ENCODE measurements at regions of chr7 and their contacts with region 1.

Region 1: DNA sequence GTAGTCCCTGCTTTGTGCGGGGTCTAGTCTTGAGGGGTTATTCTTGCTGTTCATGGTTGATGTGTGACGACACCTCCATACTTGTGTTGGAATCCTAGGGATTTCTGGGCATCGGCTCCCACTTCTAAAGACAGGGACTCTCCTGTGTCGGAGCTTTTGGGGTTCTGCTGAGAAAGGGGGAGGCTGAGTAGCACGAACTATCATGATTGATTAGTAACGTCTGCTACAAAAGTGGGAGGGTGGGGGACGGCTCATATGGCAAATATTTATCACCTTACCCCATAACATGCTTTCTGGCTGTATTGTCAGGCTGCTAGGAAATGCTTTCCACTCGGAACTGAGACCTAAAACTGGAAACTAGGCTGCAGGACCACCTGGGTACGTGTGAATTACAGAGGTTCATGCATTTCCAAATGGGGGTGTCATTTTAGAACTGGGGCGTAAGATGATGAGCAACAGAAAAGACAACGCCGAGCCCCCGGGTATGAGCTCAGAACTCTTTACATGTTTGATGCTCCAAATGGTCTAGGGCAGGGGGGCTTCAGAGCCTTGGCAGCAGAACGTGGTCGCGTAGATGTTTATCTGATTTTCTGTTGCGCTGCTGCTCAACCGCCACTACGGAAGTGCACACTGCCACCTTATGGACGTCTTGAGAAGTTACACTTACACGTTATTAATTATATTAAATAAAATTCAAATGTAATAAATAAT is 15.1 kb upstream of the NME8 start:
- DNase-seq: no peak
- ATAC-seq: peak; percentile 76
- H3K4me3 ChIP-seq: peak overlapping the region; percentile 57; the same call in 1 of the 2 replicates
- H3K27ac ChIP-seq: peak overlapping the region; percentile 26; the same call in 1 of the 2 replicates
- H3K4me1 ChIP-seq: peaks cover 4% of the 10 kb centered on the region; the same call in 1 of the 2 replicates
- H3K27me3 ChIP-seq: no peaks in the 10 kb centered on the region
- CTCF ChIP-seq: peak; percentile 59 to 67 (median 62); a peak in 5 of 6 replicates
- EP300 ChIP-seq: no peak
- POLR2A ChIP-seq: no peak
- RAD21 ChIP-seq: peak; percentile 93

Region 2: DNA sequence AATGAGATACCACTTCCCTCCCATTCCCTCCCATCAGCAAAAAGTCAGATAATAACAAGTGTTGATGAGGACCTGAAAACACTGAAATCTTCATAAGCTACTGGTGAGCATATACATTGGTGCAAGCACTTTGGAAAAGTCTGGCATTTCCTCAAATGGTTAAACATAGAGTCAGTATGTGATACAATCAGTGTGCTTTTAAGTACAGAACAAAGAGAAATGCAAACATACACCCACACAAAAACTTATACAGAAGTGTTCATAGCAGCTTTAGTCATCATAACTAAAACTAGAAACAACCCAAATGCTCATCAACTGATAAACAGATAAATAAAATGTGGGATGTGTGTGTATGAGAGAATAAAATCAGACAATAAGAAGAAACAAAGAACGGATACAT is 646.5 kb before region 1 on chr7:
- CTCF ChIA-PET with region 1: no interaction called
- POLR2A ChIA-PET with region 1: no interaction called
- RAD21 ChIA-PET with region 1: no interaction called
- SMC1A ChIA-PET with region 1: no interaction called
- in situ Hi-C with region 1: no loop called
- intact Hi-C with region 1: no loop called
- DNase-seq: no peak
- ATAC-seq: no peak
- H3K4me3 ChIP-seq: no peak overlapping the region
- H3K27ac ChIP-seq: no peak overlapping the region
- H3K4me1 ChIP-seq: no peaks in the 10 kb centered on the region
- H3K27me3 ChIP-seq: no peaks in the 10 kb centered on the region
- CTCF ChIP-seq: no peak
- EP300 ChIP-seq: no peak
- POLR2A ChIP-seq: no peak
- RAD21 ChIP-seq: no peak

Region 3: DNA sequence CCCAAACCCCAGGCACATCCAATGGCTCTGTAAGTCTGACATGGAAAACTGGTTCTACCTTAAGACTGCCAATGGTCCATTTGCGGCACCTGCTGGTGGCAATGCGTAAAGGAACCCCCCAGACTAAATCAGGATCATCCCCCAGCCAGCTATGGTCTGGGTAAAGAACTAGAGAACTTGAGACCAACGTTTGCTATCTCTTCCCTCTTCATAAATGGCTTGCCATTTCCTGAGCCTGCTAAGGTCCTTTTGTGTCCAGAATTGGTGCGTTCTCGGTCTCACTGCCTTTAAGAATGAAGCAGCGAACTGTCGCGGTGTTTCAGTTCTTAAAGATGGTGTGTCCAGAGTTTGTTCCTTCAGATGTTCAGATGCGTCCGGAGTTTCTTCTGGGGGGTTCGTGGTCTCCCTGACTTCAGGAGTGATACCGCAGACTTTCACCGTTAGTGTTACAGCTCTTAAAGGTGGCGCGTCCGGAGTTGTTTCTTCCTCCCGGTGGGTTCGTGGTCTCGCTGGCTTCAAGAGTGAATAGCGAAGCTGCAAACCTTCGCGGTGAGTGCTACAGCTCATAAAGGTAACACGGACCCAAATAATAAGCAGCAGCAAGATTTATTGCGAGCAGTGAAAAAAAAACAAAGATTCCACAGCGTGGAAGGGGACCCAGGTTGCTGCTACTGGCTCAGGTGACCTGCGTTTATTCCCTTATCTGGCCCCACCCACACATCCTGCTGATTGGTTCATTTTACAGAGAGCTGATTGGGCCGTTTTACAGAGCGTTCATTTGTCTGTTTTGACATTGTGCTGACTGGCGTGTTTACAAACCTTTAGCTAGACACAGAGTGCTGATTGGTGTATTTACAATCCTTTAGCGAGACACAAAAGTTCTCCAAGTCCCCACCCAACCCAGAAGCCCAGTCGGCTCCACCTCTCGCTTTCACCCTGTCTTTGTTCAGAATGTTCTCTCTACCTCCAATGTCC is 480.0 kb before region 1 on chr7:
- CTCF ChIA-PET with region 1: interaction called, 4 read pairs
- POLR2A ChIA-PET with region 1: no interaction called
- RAD21 ChIA-PET with region 1: interaction called, 3 read pairs
- SMC1A ChIA-PET with region 1: interaction called, 8 read pairs
- in situ Hi-C with region 1: no loop called
- intact Hi-C with region 1: loop called (anchors 5 kb)
- DNase-seq: no peak
- ATAC-seq: peak; percentile 89
- H3K4me3 ChIP-seq: peak overlapping the region; percentile 72
- H3K27ac ChIP-seq: peak overlapping the region; percentile 52; the same call in 1 of the 2 replicates
- H3K4me1 ChIP-seq: peaks cover 17% of the 10 kb centered on the region
- H3K27me3 ChIP-seq: no peaks in the 10 kb centered on the region
- CTCF ChIP-seq: peak; percentile 94 to 98 (median 97)
- EP300 ChIP-seq: no peak
- POLR2A ChIP-seq: no peak
- RAD21 ChIP-seq: peak; percentile 97

Region 4: GRCh38 chr7:37438906-37439652 is 394.2 kb before region 1 on chr7:
- CTCF ChIA-PET with region 1: no interaction called
- POLR2A ChIA-PET with region 1: no interaction called
- RAD21 ChIA-PET with region 1: no interaction called
- SMC1A ChIA-PET with region 1: no interaction called
- in situ Hi-C with region 1: no loop called
- intact Hi-C with region 1: no loop called
- DNase-seq: no peak
- ATAC-seq: no peak
- H3K4me3 ChIP-seq: no peak overlapping the region
- H3K27ac ChIP-seq: no peak overlapping the region
- H3K4me1 ChIP-seq: no peaks in the 10 kb centered on the region
- H3K27me3 ChIP-seq: no peaks in the 10 kb centered on the region; a peak in 1 of 4 replicates
- CTCF ChIP-seq: no peak
- EP300 ChIP-seq: no peak
- POLR2A ChIP-seq: no peak
- RAD21 ChIP-seq: no peak

Region 5: GRCh38 chr7:37694175-37694779 is 139.0 kb before region 1 on chr7:
- CTCF ChIA-PET with region 1: interaction called, 12 read pairs
- POLR2A ChIA-PET with region 1: no interaction called
- RAD21 ChIA-PET with region 1: interaction called, 8 read pairs
- SMC1A ChIA-PET with region 1: interaction called, 4 read pairs
- in situ Hi-C with region 1: no loop called
- intact Hi-C with region 1: no loop called
- DNase-seq: no peak
- ATAC-seq: no peak
- H3K4me3 ChIP-seq: no peak overlapping the region
- H3K27ac ChIP-seq: no peak overlapping the region; the same call in 1 of the 2 replicates
- H3K4me1 ChIP-seq: peaks cover 7% of the 10 kb centered on the region
- H3K27me3 ChIP-seq: no peaks in the 10 kb centered on the region
- CTCF ChIP-seq: no peak
- EP300 ChIP-seq: no peak
- POLR2A ChIP-seq: no peak
- RAD21 ChIP-seq: no peak

Region 6: GRCh38 chr7:37765872-37766525 is 67.3 kb before region 1 on chr7:
- CTCF ChIA-PET with region 1: interaction called, 10 read pairs
- POLR2A ChIA-PET with region 1: no interaction called
- RAD21 ChIA-PET with region 1: interaction called, 9 read pairs
- SMC1A ChIA-PET with region 1: interaction called, 3 read pairs
- in situ Hi-C with region 1: no loop called
- intact Hi-C with region 1: loop called (anchors 1 kb)
- DNase-seq: peak; percentile 82
- ATAC-seq: peak; percentile 99
- H3K4me3 ChIP-seq: peak overlapping the region; percentile 38; the same call in 1 of the 2 replicates
- H3K27ac ChIP-seq: peak overlapping the region; percentile 94
- H3K4me1 ChIP-seq: peaks cover 14% of the 10 kb centered on the region
- H3K27me3 ChIP-seq: no peaks in the 10 kb centered on the region
- CTCF ChIP-seq: no peak
- EP300 ChIP-seq: peak; percentile 62 to 83; a peak in 3 of 4 replicates
- POLR2A ChIP-seq: peak; percentile 39; the same call in 1 of the 2 replicates
- RAD21 ChIP-seq: 0 out of 2 replicates have a peak, but pooled peaks have one; percentile 18

Region 7: DNA sequence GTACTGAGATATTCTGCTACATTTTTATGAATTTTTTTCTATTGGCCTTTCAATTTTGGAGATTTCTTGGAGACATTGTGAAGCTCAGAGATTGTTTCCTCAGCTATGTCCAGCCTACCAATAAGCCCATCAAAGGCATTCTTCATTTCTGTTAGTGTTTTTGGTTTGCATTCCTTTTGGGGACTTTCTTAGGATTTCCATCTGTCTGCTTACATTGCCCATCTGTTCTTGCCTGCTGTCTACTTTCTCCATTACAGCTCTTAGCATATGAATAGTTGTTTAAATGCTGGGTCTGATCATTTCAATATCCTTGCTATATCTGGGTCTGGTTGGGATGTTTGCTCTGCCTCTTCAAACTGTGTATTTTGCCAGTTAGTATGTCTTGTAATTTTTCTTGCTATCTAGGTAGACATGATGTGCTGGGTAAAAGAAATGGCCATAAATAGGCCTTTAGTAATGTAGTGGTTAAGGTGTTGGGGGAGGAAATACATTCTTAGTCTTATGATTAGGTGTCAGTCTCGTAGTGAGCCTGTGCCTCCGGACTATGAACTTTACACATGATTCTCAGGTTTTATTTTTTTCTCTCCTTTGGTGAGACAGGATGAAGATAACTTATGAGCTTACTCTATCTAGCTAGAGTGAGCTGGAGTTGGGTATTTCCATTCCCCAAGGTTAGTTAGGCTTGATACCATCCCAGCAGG is 17.4 kb before region 1 on chr7:
- CTCF ChIA-PET with region 1: interaction called, 71 read pairs
- POLR2A ChIA-PET with region 1: interaction called, 4 read pairs
- RAD21 ChIA-PET with region 1: interaction called, 76 read pairs
- SMC1A ChIA-PET with region 1: interaction called, 115 read pairs
- in situ Hi-C with region 1: no loop called
- intact Hi-C with region 1: no loop called
- DNase-seq: peak; percentile 78
- ATAC-seq: peak; percentile 89
- H3K4me3 ChIP-seq: peak overlapping the region; percentile 6; the same call in 1 of the 2 replicates
- H3K27ac ChIP-seq: peak overlapping the region; percentile 90
- H3K4me1 ChIP-seq: peaks cover 43% of the 10 kb centered on the region
- H3K27me3 ChIP-seq: no peaks in the 10 kb centered on the region
- CTCF ChIP-seq: no peak
- EP300 ChIP-seq: peak; percentile 94 to 95
- POLR2A ChIP-seq: no peak
- RAD21 ChIP-seq: 0 out of 2 replicates have a peak, but pooled peaks have one; percentile 6

Region 8: GRCh38 chr7:38086857-38087256 is 253.6 kb after region 1 on chr7:
- CTCF ChIA-PET with region 1: no interaction called
- POLR2A ChIA-PET with region 1: no interaction called
- RAD21 ChIA-PET with region 1: no interaction called
- SMC1A ChIA-PET with region 1: no interaction called
- in situ Hi-C with region 1: no loop called
- intact Hi-C with region 1: no loop called
- DNase-seq: no peak
- ATAC-seq: no peak
- H3K4me3 ChIP-seq: no peak overlapping the region
- H3K27ac ChIP-seq: no peak overlapping the region
- H3K4me1 ChIP-seq: no peaks in the 10 kb centered on the region
- H3K27me3 ChIP-seq: no peaks in the 10 kb centered on the region
- CTCF ChIP-seq: no peak
- EP300 ChIP-seq: no peak
- POLR2A ChIP-seq: no peak
- RAD21 ChIP-seq: no peak